Activated CD4-positive, alpha-beta T cell treated with anti-CD3 and anti-CD28 coated beads for 36 hours (primary cell): ENCODE measurements at regions of chr12 and their contacts with region 1.

Region 1: DNA sequence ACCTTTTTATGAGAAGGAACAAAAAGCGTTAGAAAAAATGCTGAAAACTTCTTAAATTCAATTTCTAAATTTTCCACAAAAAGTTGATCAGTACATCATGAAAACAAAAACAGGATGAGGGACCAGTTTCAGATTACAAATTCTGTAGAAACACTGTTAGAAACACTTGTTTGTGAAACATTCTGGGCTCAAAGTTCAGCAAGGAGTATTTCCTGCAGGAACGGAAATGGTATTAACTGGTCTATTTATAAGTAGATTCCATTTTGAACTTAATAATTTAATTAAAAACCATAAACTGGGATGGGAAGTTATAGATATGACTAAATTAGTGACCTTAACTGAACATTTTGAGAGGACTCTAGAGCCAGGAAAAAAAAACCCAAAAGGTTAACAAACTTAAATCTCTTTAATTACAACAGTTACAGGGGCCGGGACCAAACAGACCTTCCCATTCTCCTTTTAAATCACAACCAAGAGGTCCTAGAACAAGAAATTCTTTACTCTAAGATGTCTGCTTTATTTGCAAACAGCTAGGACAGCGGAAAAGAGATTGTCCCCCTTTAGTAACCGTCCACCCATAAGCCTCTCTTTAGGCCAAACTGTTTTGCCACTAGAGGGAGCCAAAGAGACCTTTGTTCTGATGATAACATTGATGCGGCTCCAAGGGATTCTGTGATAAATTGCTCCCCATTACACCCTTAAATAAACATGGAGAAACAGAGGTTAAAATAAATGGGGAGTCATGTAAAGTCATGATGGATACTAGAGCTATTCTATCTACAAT is 69.0 kb upstream of the RERGL start:
- DNase-seq: peak; percentile 37
- ATAC-seq: peak; percentile 42
- H3K4me3 Mint-ChIP-seq: no peak overlapping the region
- H3K27ac Mint-ChIP-seq: no peak overlapping the region
- H3K4me1 Mint-ChIP-seq: no peaks in the 10 kb centered on the region
- H3K27me3 Mint-ChIP-seq: no peaks in the 10 kb centered on the region

Region 2: DNA sequence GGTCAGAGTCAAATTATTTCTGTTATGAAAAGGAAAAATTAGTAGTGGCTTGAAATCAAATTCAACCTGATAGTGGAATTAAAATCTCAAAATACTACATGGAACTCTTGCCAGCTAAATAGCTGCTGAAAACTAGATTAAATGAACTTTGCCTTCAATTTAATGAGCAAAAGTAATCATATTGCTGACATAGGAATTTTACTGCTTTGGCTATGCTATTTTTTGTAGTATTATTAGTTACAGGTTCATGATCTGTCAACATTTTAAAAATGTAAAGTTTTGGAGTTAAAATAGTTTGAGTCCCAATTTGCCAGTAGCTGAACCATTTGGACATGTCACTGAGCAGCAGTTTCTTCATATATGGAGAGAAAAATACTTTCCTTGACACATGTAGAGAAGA is 150.3 kb before region 1 on chr12:
- CTCF ChIA-PET with region 1: no interaction called
- POLR2A ChIA-PET with region 1: no interaction called
- intact Hi-C with region 1: no loop called
- DNase-seq: no peak
- ATAC-seq: no peak
- H3K4me3 Mint-ChIP-seq: no peak overlapping the region
- H3K27ac Mint-ChIP-seq: no peak overlapping the region
- H3K4me1 Mint-ChIP-seq: no peaks in the 10 kb centered on the region
- H3K27me3 Mint-ChIP-seq: no peaks in the 10 kb centered on the region

Region 3: DNA sequence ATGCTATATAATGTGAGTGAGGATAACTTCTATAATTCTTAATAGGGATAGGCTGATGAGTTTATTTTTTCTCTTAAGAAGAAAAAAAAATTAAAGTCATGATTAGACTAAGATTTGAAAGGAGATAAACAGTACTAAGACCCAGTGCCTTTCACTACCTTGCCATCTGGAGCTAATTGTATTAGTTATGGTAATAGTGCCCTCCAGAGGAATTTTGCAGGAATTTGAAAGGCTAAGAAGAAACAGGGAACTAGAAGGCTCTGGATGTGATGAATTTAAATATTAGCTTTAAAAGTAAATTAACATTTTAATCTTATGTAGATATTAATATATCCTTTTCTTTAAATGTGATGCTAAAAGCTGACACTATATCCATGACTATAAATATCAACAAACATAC is 65.8 kb after region 1 on chr12:
- CTCF ChIA-PET with region 1: interaction called, 6 read pairs
- POLR2A ChIA-PET with region 1: no interaction called
- intact Hi-C with region 1: loop called (anchors 1 kb)
- DNase-seq: no peak
- ATAC-seq: no peak
- H3K4me3 Mint-ChIP-seq: no peak overlapping the region
- H3K27ac Mint-ChIP-seq: no peak overlapping the region
- H3K4me1 Mint-ChIP-seq: no peaks in the 10 kb centered on the region
- H3K27me3 Mint-ChIP-seq: no peaks in the 10 kb centered on the region